ENCODE measurements at regions of chr10 and their contacts with region 1.

Region 1: DNA sequence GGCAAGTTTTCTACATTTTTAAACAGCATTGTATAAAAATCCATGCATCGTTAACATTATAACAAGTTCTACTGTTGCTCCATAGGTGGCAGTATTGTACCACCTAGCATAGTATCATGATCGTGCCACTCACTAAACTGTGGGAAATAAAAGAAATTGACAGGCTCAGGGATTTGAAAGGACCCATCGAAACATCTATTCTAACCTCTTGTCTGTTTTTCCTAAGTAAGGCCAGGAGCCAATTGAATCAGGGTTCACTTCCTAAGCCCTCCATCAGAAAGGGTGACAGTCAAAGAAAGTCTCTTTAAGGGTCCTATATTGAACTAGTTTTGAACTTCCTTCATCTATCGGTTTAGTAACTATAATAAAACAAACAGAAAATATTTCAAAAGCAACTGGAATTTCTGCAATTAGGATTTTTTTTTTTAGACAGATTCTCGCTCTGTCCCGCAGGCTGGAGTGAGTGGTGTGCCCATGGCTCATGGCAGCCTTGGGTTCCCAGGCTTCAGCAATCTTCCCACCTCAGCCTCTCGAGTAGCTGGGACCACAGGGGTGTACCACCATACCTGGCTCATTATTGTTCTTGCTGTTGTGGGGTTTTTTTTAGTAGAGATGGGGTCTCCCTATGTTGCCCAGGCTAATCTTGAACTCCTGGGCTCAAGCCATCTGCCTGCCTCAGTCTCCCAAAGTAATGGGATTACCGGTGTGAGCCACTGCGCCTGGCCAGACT is 9.4 kb downstream of the HACD1 start:
- DNase-seq: peak; percentile 64
- ATAC-seq: peak; percentile 76
- H3K4me3 ChIP-seq: no peak overlapping the region
- H3K4me3 Mint-ChIP-seq: no peak overlapping the region
- H3K27ac ChIP-seq: no peak overlapping the region
- H3K27ac Mint-ChIP-seq: no peak overlapping the region
- H3K4me1 ChIP-seq: no peaks in the 10 kb centered on the region
- H3K4me1 Mint-ChIP-seq: peaks cover 2% of the 10 kb centered on the region
- H3K27me3 ChIP-seq: no peaks in the 10 kb centered on the region
- H3K27me3 Mint-ChIP-seq: peaks cover 4% of the 10 kb centered on the region
- CTCF ChIP-seq: peak; percentile 96

Region 2: GRCh38 chr10:17516376-17516775 is 91.4 kb before region 1 on chr10:
- CTCF ChIA-PET with region 1: no interaction called
- POLR2A ChIA-PET with region 1: no interaction called
- intact Hi-C with region 1: no loop called
- DNase-seq: no peak
- ATAC-seq: no peak
- H3K4me3 ChIP-seq: no peak overlapping the region
- H3K4me3 Mint-ChIP-seq: no peak overlapping the region
- H3K27ac ChIP-seq: no peak overlapping the region
- H3K27ac Mint-ChIP-seq: no peak overlapping the region
- H3K4me1 ChIP-seq: no peaks in the 10 kb centered on the region
- H3K4me1 Mint-ChIP-seq: no peaks in the 10 kb centered on the region
- H3K27me3 ChIP-seq: no peaks in the 10 kb centered on the region
- H3K27me3 Mint-ChIP-seq: peaks cover 9% of the 10 kb centered on the region
- CTCF ChIP-seq: no peak

Region 3: DNA sequence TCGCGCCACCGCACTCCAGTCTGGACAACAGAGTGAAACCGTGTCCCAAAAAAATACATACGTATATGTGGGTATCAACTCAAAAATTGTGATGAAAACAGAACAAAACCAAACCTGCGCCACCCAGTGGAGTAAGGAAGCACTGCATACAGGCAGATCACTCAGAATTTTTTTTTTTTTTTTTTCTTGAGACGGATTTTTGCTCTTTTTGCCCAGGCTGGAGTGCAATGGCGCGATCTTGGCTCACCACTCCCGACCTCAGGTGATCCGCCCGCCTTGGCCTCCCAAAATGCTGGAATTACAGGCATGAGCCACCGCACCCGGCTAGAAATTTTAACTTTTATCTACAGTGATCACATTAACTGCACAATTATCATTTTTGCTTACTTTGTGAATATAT is 135.2 kb after region 1 on chr10:
- CTCF ChIA-PET with region 1: interaction called, 75 read pairs
- POLR2A ChIA-PET with region 1: no interaction called
- intact Hi-C with region 1: loop called (anchors 1 kb)
- DNase-seq: peak; percentile 64
- ATAC-seq: peak; percentile 63
- H3K4me3 ChIP-seq: no peak overlapping the region
- H3K4me3 Mint-ChIP-seq: no peak overlapping the region
- H3K27ac ChIP-seq: no peak overlapping the region
- H3K27ac Mint-ChIP-seq: no peak overlapping the region
- H3K4me1 ChIP-seq: no peaks in the 10 kb centered on the region
- H3K4me1 Mint-ChIP-seq: peaks cover 7% of the 10 kb centered on the region
- H3K27me3 ChIP-seq: no peaks in the 10 kb centered on the region
- H3K27me3 Mint-ChIP-seq: no peaks in the 10 kb centered on the region
- CTCF ChIP-seq: peak; percentile 90

Region 4: GRCh38 chr10:18238870-18239485 is 631.2 kb after region 1 on chr10:
- CTCF ChIA-PET with region 1: no interaction called
- POLR2A ChIA-PET with region 1: no interaction called
- intact Hi-C with region 1: loop called (anchors 5 kb)
- DNase-seq: peak; percentile 8
- ATAC-seq: no peak
- H3K4me3 ChIP-seq: no peak overlapping the region
- H3K4me3 Mint-ChIP-seq: no peak overlapping the region
- H3K27ac ChIP-seq: no peak overlapping the region
- H3K27ac Mint-ChIP-seq: no peak overlapping the region
- H3K4me1 ChIP-seq: no peaks in the 10 kb centered on the region
- H3K4me1 Mint-ChIP-seq: no peaks in the 10 kb centered on the region
- H3K27me3 ChIP-seq: no peaks in the 10 kb centered on the region
- H3K27me3 Mint-ChIP-seq: no peaks in the 10 kb centered on the region
- CTCF ChIP-seq: peak; percentile 31